GM12878 (cell line): ENCODE measurements at regions of chr7 and their contacts with region 1.

Region 1: DNA sequence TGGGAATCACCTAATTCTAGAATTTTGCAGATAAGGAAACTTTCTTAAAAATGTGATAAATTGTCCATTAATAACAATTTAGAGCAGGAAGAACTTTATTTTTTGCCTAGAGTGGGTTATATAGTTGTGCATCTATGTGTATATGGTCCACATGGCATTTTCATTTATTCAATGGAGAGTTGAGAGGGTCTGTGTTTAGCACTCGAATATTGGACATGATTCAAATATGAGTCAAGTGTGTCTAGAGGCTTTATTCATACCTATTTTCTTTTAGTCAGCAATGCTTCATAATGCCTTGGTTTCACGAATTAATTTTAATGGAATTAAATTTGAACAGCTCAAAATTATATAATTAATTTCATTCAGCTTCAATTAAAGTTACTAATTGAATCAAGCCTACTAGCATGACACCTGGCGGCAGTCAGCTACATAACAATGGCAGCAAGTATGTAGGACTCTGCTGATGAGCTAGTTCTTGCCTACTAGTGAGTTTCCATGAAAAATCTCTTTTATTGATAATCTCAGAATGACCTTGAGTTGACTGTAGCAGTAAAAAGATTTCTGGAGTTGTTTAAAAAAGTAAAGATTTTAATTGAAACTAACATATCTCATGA is 17.7 kb downstream of the MDFIC start:
- DNase-seq: no peak
- ATAC-seq: peak; percentile 51
- H3K4me3 ChIP-seq: no peak overlapping the region
- H3K27ac ChIP-seq: no peak overlapping the region; the same call in 1 of the 2 replicates
- H3K4me1 ChIP-seq: peaks cover 47% of the 10 kb centered on the region
- H3K27me3 ChIP-seq: no peaks in the 10 kb centered on the region
- CTCF ChIP-seq: peak; percentile 44 to 57 (median 55); a peak in 5 of 6 replicates
- EP300 ChIP-seq: no peak
- POLR2A ChIP-seq: no peak
- RAD21 ChIP-seq: peak; percentile 63

Region 2: GRCh38 chr7:114364151-114364550 is 575.4 kb before region 1 on chr7:
- CTCF ChIA-PET with region 1: no interaction called
- POLR2A ChIA-PET with region 1: no interaction called
- RAD21 ChIA-PET with region 1: no interaction called
- SMC1A ChIA-PET with region 1: no interaction called
- in situ Hi-C with region 1: no loop called
- intact Hi-C with region 1: no loop called
- DNase-seq: no peak
- ATAC-seq: no peak
- H3K4me3 ChIP-seq: no peak overlapping the region
- H3K27ac ChIP-seq: no peak overlapping the region
- H3K4me1 ChIP-seq: no peaks in the 10 kb centered on the region
- H3K27me3 ChIP-seq: no peaks in the 10 kb centered on the region
- CTCF ChIP-seq: no peak
- EP300 ChIP-seq: no peak
- POLR2A ChIP-seq: no peak
- RAD21 ChIP-seq: no peak

Region 3: DNA sequence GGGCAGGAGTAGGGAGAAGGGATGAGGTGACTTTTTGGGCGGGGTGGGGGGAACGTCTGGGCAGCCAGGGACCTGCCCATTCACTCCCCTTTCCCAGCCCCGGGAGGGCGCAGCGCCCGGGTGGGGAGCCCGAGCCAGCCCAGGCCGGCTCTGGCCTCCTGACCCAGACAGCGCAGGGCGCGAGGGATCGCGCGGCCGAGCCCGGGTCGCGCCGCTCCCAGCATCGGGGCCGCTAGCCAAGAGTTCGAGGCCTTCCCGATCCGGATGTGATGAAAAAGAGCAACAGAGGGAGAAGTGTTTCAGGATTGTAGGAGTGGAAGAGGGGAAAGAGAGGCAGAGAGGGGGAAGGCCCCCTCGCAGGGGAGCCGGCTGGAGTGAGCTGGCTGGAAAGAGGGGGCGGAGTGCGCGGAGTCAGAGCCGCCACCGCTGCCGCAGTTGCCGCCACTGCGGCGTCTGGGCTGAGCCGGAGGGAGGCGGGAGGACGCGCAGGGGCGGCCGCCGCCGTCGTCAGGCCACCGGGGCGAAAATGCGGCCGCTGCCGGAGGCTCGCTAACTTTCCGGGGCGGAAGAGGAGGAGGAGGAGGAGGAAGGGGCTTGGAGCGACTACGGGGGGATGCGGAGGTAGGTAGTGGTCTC is 17.5 kb before region 1 on chr7 and contains the start of gene MDFIC:
- CTCF ChIA-PET with region 1: interaction called, 48 read pairs
- POLR2A ChIA-PET with region 1: interaction called, 19 read pairs
- RAD21 ChIA-PET with region 1: interaction called, 80 read pairs
- SMC1A ChIA-PET with region 1: interaction called, 154 read pairs
- in situ Hi-C with region 1: no loop called
- intact Hi-C with region 1: loop called (anchors 2 kb)
- DNase-seq: no peak
- ATAC-seq: peak; percentile 65
- H3K4me3 ChIP-seq: peak within 1 kb of the TSS; percentile 85
- H3K27ac ChIP-seq: peak within 1 kb of the TSS; percentile 92
- H3K4me1 ChIP-seq: peaks cover 20% of the 10 kb centered on the region
- H3K27me3 ChIP-seq: no peaks in the 10 kb centered on the region
- CTCF ChIP-seq: peak in 2 of 3 experiments; percentile 6 to 8; a peak in 1 of 6 replicates
- EP300 ChIP-seq: no peak
- POLR2A ChIP-seq: peak; percentile 90
- RAD21 ChIP-seq: no peak
- polyA plus RNA-seq, gene MDFIC: 11.5 to 16.1 TPM